ENCODE measurements at regions of chr6 and their contacts with region 1.

Region 1: GRCh38 chr6:53348371-53349208 is at the start of gene ELOVL5:
- DNase-seq: peak; percentile 99
- H3K4me3 ChIP-seq: peak within 1 kb of the TSS; percentile 67 to 99 (median 90)
- H3K27ac ChIP-seq: peak within 1 kb of the TSS; percentile 91 to 100 (median 100)
- H3K4me1 ChIP-seq: peaks cover 0 to 30% (median 21%) of the 10 kb centered on the region in 4 donors
- H3K27me3 ChIP-seq: no peaks in the 10 kb centered on the region
- CTCF ChIP-seq: no peak
- EP300 ChIP-seq: peak in 1 of 4 donors; percentile 59
- POLR2A ChIP-seq: peak; percentile 77 to 91
- total RNA-seq, gene ELOVL5: 54.3 to 73.8 (median 70.4) TPM

Region 2: DNA sequence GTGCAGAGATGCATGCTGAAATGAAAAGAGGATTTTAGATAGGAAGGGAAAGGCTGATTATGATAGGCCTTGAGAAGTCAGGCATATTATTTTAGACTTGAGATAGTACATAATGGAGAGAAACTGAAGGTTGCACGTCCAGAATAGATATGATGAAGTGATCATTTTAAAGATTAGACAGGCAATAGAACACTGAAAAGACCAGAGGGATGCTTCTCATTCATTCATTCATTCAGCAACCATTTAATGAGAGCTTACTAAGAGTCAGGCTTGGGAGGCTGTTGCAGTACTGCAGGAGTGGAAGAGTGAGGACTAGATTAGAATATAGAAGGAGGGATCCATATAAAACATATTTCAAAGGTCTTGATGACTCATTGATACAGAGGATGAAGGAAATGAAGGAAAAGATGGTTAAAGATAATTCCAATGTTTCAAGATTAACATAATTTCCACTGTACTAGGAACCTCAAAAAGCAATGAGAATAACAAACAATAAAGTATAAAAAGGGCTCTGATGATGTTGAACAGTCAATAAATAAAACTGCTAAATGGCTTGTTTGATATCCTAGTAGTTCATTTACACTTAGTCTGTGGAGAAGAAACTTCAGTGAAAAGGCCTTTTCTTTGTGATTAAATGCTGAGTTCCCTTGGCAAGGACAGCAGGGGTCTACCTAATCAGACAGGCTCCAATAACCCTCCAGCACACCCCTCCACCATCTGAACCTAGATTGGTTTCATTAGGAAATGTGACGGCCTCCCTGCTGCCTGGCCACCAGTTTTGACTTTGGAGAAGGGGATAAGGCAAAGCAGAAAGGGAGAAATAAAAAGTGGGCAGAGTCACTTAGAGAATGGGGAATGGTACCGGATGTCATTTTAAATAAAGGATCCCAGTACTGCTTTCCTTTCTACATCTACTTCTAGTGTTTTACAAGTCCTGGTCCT is 288.7 kb before region 1 on chr6:
- intact Hi-C with region 1: no loop called
- DNase-seq: no peak
- H3K4me3 ChIP-seq: peak overlapping the region; percentile 70 to 92 (median 88)
- H3K27ac ChIP-seq: peak overlapping the region; percentile 53 to 96 (median 94)
- H3K4me1 ChIP-seq: peaks cover 0 to 62% (median 56%) of the 10 kb centered on the region in 4 donors
- H3K27me3 ChIP-seq: no peaks in the 10 kb centered on the region
- CTCF ChIP-seq: no peak
- EP300 ChIP-seq: no peak
- POLR2A ChIP-seq: no peak

Region 3: DNA sequence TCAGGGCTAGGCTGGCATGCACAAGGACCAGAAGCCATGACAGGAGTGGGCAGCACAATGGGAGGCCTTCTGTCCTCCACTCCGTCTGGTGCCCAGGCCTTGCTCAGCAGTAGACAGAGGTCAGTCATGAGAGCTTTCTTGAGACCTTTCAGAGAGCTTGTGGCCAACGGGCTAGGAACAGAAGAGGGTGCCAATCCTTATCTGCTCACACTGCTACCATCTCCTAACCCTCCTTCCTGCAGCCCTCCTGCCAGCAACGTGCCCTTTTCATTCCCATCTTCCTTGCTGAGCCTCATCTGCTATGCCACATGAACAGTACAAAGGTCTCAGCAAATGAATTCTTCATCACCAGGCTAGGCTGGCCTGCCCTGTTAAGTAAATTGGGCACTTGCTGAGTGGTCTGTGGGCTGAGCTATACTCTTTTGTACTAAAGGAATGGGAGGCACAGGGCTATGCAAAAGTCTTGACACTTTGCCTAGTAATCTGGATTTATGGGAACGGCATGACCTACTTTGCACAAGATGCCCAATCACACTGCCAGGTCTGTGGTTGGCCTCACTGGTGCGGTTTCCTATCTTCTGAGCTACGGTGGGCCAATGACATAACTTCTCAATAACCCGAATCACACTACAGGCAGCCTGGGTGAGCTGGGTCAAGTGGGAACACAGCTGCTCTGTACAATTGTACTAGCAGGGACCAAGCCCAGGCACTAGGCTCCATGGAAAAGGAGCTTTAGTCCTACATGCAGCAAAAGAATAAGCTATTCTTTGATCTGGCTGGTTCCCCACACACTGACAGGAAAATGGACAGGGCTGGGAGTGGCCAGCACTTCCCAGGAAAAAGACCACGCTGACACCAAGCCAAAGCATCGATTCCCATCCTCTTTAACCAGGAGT is 47.7 kb before region 1 on chr6:
- intact Hi-C with region 1: loop called (anchors 5 kb)
- DNase-seq: no peak
- H3K4me3 ChIP-seq: no peak overlapping the region
- H3K27ac ChIP-seq: peak overlapping the region; percentile 27 to 66 (median 48)
- H3K4me1 ChIP-seq: peaks cover 0 to 54% (median 48%) of the 10 kb centered on the region in 4 donors
- H3K27me3 ChIP-seq: no peaks in the 10 kb centered on the region
- CTCF ChIP-seq: no peak
- EP300 ChIP-seq: no peak
- POLR2A ChIP-seq: no peak